ENCODE measurements at regions of chr16 and their contacts with region 1.

Region 1: GRCh38 chr16:75198135-75198600 is 8.8 kb downstream of the CTRB2 start:
- DNase-seq: no peak
- ATAC-seq: no peak
- H3K4me3 ChIP-seq: no peak overlapping the region
- H3K27ac ChIP-seq: no peak overlapping the region
- H3K4me1 ChIP-seq: peaks cover 3% of the 10 kb centered on the region; the same call in 1 of the 2 replicates
- H3K27me3 ChIP-seq: peaks cover 1 to 4% of the 10 kb centered on the region in 2 experiments
- CTCF ChIP-seq: no peak
- EP300 ChIP-seq: no peak
- POLR2A ChIP-seq: no peak
- RAD21 ChIP-seq: no peak

Region 2: DNA sequence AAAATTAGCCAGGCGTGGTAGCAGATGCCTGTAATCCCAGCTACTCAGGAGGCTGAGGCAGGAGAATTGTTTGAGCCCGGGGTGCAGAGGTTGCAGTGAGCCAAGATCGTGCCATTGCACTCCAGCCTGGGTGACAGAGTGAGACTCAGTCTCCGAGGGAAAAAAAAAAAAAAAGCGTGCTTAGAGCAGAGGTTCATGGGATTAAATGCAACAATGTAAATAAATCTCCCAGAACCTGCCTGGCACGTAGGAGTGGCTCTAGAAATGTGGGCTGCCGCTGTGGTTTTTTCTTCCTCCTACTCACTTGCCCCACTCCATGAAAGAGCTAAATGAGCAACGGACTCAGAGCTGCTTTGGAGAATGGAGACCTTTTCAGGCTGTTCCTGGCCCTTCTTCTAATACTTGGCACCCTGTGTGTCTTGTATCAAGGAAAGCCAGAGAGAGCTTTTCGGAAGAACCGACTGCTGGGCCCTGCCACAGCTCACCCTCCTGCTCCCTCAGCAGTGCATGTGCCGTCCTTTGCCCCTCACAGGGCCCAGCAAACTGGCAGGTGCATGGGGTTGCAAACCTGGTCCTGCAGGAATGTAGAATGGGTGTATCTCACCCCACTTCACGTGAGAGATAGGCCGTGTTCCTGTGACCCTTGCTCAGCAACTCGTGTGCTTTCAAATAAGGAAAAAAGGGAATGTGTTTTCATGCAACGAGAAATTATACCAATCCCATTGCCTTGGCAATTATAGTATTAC is 133.6 kb before region 1 on chr16:
- CTCF ChIA-PET with region 1: no interaction called
- POLR2A ChIA-PET with region 1: no interaction called
- RAD21 ChIA-PET with region 1: no interaction called
- SMC1A ChIA-PET with region 1: no interaction called
- in situ Hi-C with region 1: no loop called
- intact Hi-C with region 1: no loop called
- DNase-seq: no peak
- ATAC-seq: no peak
- H3K4me3 ChIP-seq: no peak overlapping the region
- H3K27ac ChIP-seq: no peak overlapping the region
- H3K4me1 ChIP-seq: peaks cover 14% of the 10 kb centered on the region
- H3K27me3 ChIP-seq: no peaks in the 10 kb centered on the region
- CTCF ChIP-seq: no peak
- EP300 ChIP-seq: no peak
- POLR2A ChIP-seq: no peak
- RAD21 ChIP-seq: no peak

Region 3: DNA sequence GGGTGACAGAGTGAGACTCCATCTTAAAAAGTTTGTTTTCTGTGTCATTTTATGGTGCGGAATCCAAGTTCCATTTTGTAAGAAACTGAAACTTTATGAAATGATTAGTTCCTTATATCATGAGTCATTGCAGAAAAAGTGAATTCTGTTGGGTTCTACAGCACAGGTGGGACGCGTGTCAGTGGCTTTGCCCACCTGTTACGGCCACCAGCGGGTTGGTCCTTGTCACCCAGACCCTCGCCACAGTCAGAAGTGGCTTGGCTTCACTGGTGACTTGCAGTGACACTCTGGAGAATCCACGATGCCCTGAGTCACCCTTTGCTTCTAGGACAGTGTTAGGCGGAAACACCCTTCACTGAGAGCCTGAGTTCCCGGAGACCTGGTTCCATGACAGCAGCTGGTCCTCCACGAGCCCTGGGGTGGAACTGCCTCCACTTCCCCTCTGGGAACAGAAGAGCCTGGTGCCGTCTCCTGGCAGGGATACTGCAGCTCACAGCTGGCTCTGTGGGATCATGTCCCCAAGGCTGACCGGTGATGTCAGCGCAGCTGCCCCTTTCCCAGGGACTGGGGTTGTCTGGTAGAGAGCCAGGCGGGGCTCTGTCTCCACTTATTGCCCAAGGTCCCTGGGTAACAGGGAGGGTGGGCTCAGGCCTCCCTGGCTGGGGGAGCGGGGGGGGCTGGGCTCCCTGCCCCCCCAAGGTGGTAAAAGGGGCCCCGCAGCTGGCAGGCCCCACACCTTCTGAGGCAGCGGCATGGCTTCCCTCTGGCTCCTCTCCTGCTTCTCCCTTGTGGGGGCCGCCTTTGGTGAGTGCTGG is 20.3 kb after region 1 on chr16 and contains the start of gene CTRB1:
- CTCF ChIA-PET with region 1: interaction called, 11 read pairs
- POLR2A ChIA-PET with region 1: interaction called, 3 read pairs
- RAD21 ChIA-PET with region 1: interaction called, 7 read pairs
- SMC1A ChIA-PET with region 1: interaction called, 9 read pairs
- in situ Hi-C with region 1: no loop called
- intact Hi-C with region 1: loop called (anchors 2 kb)
- DNase-seq: no peak
- ATAC-seq: peak; percentile 79
- H3K4me3 ChIP-seq: no peak within 1 kb of the TSS
- H3K27ac ChIP-seq: peak within 1 kb of the TSS; percentile 20; the same call in 1 of the 2 replicates
- H3K4me1 ChIP-seq: peaks cover 20% of the 10 kb centered on the region
- H3K27me3 ChIP-seq: no peaks in the 10 kb centered on the region
- CTCF ChIP-seq: no peak
- EP300 ChIP-seq: no peak; a peak in 1 of 4 replicates
- POLR2A ChIP-seq: peak; percentile 52; the same call in 1 of the 2 replicates
- RAD21 ChIP-seq: no peak
- polyA plus RNA-seq, gene CTRB1: not detected

Region 4: DNA sequence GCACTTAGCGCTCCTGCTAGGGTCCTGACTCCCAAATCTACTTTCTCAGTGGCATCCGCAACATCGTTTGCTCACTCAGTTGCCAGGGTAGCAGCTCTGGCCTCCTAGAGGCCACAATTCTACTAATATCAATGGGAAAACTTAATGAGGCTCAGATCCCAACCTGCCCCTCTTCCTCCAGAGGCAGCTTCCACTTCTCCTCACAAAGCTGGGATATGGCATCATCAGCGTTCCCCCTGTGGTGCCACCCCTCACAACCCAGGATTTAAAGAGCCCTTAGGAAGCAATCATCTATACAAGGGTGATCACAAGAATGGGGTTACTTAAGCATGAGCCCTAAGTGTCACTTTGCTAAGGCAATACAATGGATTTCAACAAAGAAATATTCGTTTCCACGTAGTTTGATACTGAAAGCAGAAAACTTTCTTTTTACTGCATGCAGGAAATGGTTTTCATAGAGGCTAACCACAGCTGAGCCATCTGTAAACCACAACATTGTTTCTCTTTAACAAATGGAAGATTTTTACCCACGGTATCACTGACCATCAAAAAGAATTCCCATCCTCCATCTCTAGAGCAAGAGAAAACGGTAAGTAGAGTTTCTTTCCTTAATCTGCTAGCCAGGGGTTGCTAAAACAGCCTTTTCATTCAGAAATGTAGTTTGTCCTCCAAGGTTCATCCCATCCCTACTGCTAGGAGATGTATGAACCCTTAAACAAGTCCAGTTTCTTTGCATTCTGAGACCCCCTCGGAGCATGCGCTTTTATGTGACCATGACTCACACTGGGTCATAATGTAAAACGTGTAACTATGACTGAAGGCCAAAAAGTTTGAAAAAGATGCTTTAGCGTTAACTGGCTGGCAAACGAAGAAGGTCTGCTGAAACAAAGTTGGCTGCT is 121.6 kb after region 1 on chr16:
- CTCF ChIA-PET with region 1: interaction called, 11 read pairs
- POLR2A ChIA-PET with region 1: interaction called, 5 read pairs
- RAD21 ChIA-PET with region 1: interaction called, 6 read pairs
- SMC1A ChIA-PET with region 1: interaction called, 7 read pairs
- in situ Hi-C with region 1: no loop called
- intact Hi-C with region 1: no loop called
- DNase-seq: peak; percentile 78
- ATAC-seq: peak; percentile 76
- H3K4me3 ChIP-seq: peak overlapping the region; percentile 4; the same call in 1 of the 2 replicates
- H3K27ac ChIP-seq: peak overlapping the region; percentile 79
- H3K4me1 ChIP-seq: peaks cover 34% of the 10 kb centered on the region
- H3K27me3 ChIP-seq: no peaks in the 10 kb centered on the region
- CTCF ChIP-seq: no peak
- EP300 ChIP-seq: peak; percentile 67 to 86; a peak in 3 of 4 replicates
- POLR2A ChIP-seq: no peak
- RAD21 ChIP-seq: 0 out of 2 replicates have a peak, but pooled peaks have one; percentile 14

Region 5: GRCh38 chr16:75385507-75386152 is 187.5 kb after region 1 on chr16:
- CTCF ChIA-PET with region 1: interaction called, 170 read pairs
- POLR2A ChIA-PET with region 1: interaction called, 6 read pairs
- RAD21 ChIA-PET with region 1: interaction called, 65 read pairs
- SMC1A ChIA-PET with region 1: interaction called, 52 read pairs
- in situ Hi-C with region 1: loop called (anchors 5 kb)
- intact Hi-C with region 1: loop called (anchors 1 kb)
- DNase-seq: peak; percentile 33
- ATAC-seq: peak; percentile 67
- H3K4me3 ChIP-seq: no peak overlapping the region
- H3K27ac ChIP-seq: no peak overlapping the region
- H3K4me1 ChIP-seq: peaks cover 14% of the 10 kb centered on the region
- H3K27me3 ChIP-seq: no peaks in the 10 kb centered on the region
- CTCF ChIP-seq: peak; percentile 39 to 72 (median 49); a peak in 4 of 6 replicates
- EP300 ChIP-seq: no peak
- POLR2A ChIP-seq: no peak
- RAD21 ChIP-seq: peak; percentile 87

Region 6: DNA sequence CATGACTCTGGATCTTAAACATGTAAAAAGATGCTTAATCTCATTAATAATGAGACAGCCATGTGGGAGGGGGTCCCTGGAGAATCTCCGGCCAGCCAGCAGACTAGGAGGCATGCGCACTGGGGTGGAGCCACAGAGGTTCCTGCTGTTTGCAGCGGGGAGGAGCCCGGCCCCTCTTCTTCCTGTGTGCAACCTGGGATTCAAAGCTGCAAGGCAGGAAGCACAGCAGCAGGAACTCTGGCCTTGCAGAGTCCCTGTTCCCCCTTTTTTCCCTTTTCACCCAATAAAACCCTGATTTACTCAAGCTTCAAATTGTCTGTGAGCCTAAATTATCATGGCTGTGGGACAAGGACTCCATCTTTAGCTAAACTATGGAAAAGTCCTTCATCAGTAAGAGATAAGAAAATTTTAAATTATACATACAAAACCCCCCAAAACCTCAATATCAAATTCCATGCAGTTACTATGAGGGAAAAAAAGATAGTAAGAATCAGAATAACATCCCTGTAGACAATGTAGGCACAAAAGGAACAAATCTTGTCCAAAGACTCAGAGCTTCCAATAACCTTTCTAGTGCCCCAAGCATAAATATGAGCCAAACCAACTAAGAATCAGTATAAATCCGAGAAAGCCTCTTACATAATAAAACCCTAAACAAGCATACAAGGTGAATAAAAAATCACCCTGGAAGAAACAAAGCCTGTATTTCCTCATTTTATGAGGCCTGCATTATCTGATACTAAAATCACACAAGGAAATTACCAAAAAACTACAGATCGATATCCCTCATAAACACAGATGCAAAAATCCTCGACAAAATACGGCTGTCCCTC is 223.0 kb after region 1 on chr16:
- CTCF ChIA-PET with region 1: interaction called, 15 read pairs
- POLR2A ChIA-PET with region 1: interaction called, 3 read pairs
- RAD21 ChIA-PET with region 1: interaction called, 7 read pairs
- SMC1A ChIA-PET with region 1: no interaction called
- in situ Hi-C with region 1: no loop called
- intact Hi-C with region 1: no loop called
- DNase-seq: no peak
- ATAC-seq: peak; percentile 98
- H3K4me3 ChIP-seq: 0 out of 2 replicates have a peak overlapping the region, but pooled peaks have one; percentile 37
- H3K27ac ChIP-seq: peak overlapping the region; percentile 64; the same call in 1 of the 2 replicates
- H3K4me1 ChIP-seq: peaks cover 10% of the 10 kb centered on the region; the same call in 1 of the 2 replicates
- H3K27me3 ChIP-seq: no peaks in the 10 kb centered on the region
- CTCF ChIP-seq: no peak
- EP300 ChIP-seq: no peak
- POLR2A ChIP-seq: no peak
- RAD21 ChIP-seq: no peak

Region 7: GRCh38 chr16:75550211-75550662 is 352.1 kb after region 1 on chr16:
- CTCF ChIA-PET with region 1: interaction called, 12 read pairs
- POLR2A ChIA-PET with region 1: interaction called, 3 read pairs
- RAD21 ChIA-PET with region 1: interaction called, 6 read pairs
- SMC1A ChIA-PET with region 1: no interaction called
- in situ Hi-C with region 1: no loop called
- intact Hi-C with region 1: no loop called
- DNase-seq: peak; percentile 69
- ATAC-seq: peak; percentile 89
- H3K4me3 ChIP-seq: no peak overlapping the region
- H3K27ac ChIP-seq: no peak overlapping the region
- H3K4me1 ChIP-seq: peaks cover 8% of the 10 kb centered on the region
- H3K27me3 ChIP-seq: no peaks in the 10 kb centered on the region
- CTCF ChIP-seq: peak; percentile 70 to 78 (median 77)
- EP300 ChIP-seq: no peak
- POLR2A ChIP-seq: no peak
- RAD21 ChIP-seq: peak; percentile 85

Measured in GM12878 (cell line).